Activated T-helper 2 cell treated with anti-CD3 and anti-CD28 coated beads, Interferon-gamma antibody, Interleukin-2, Interleukin-4, amounts not matched to agents 10 μg/mL and 5 μg/mL and 100 μg/mL, durations not matched to agents 14 hours and 24 hours and 36 hours (primary cell): ENCODE measurements at regions of chr7 and their contacts with region 1.

Region 1: DNA sequence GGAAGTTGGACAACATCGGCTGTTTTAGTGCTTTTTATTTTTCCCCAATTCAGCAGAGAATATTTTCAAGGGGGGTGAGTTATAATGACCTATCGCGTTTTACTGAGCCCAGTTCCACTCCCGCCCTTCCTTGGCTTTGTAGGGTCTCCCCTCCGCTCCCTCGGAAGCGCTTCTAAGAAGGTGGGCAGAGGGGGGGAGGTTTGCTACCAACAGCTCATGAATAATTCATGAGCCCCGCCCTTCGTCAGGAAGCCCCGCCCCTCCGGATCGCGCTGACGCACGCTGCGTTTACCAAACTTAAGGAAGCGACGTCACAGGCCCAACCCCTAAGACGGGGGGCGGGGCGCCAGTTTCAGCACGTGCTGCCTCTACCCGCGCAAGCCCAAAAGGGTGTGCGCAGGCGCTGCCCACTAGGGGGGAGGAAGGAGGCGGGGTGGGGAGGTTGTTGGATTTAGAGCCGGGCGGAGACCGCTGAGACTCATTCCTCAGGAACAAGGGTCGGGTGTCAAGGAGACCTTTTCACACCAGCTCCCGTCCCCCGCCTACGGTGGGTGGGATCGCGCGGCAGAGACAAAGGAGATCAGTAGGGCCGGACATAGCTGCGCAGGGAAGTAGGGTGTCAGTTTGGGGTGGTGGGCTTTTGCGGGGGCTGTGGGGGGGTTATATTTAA is 529 bp upstream of the MEPCE start:
- DNase-seq: peak; percentile 100
- H3K4me3 Mint-ChIP-seq: peak overlapping the region; percentile 90
- H3K27ac Mint-ChIP-seq: peak overlapping the region; percentile 96
- H3K4me1 Mint-ChIP-seq: peaks cover 28% of the 10 kb centered on the region
- H3K27me3 Mint-ChIP-seq: peaks cover 2% of the 10 kb centered on the region

Region 2: GRCh38 chr7:100101016-100101862 is 327.9 kb before region 1 on chr7 and contains the starts of genes AP4M1 and MCM7:
- intact Hi-C with region 1: loop called (anchors 2 kb)
- DNase-seq: peak; percentile 98
- H3K4me3 Mint-ChIP-seq: peak within 1 kb of the TSS; percentile 93
- H3K27ac Mint-ChIP-seq: peak within 1 kb of the TSS; percentile 93
- H3K4me1 Mint-ChIP-seq: peaks cover 37% of the 10 kb centered on the region
- H3K27me3 Mint-ChIP-seq: no peaks in the 10 kb centered on the region
- total RNA-seq, gene AP4M1: 12.2 and 16.4 TPM in 2 replicates
- total RNA-seq, gene MCM7: 383 and 389 TPM in 2 replicates

Region 3: DNA sequence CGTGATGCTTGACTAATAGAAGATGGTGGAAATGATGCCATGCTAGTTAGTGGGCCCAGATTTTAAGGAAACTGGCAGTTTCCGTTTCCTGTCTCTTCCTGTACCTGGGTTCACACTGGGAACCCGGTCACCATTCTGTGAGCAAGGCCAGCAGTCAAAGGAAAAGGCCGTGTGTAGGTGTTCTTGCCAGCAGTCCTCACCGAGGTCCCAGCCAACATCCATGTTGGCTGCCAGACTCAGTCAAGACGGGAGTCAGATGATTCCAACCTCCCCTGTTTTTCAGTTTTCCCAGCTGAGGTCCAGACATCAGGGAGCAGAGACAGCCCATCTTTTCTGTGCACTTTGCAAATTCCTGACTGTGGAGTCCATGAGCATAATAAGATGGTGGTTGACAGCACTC is 86.3 kb before region 1 on chr7:
- intact Hi-C with region 1: loop called (anchors 1 kb)
- DNase-seq: no peak
- H3K4me3 Mint-ChIP-seq: no peak overlapping the region
- H3K27ac Mint-ChIP-seq: peak overlapping the region; percentile 46
- H3K4me1 Mint-ChIP-seq: peaks cover 25% of the 10 kb centered on the region
- H3K27me3 Mint-ChIP-seq: no peaks in the 10 kb centered on the region

Region 4: DNA sequence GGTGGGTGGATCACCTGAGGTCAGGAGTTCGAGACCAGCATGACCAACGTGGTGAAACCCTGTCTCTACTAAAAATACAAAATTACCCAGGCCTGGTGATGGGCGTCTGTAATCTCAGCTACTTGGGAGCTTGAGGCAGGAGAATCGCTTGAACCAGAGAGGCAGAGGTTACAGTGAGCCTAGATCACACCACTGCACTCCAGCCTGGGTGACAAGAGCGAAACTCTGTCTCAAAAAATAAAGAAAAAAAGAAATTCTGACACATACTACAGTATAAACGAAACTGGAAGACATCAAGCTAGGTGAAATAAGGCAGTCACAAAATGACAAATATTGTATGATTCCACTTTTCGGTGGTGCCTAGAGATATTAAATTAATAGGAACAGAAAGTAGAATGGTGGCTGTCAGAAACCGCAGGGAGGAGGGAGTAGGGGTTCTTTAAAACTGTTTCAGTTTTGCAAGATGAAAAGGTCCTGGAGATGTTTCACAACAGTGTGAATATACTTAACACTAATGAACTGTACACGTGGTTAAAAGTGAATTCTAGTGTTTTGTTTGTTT is 32.6 kb before region 1 on chr7:
- intact Hi-C with region 1: loop called (anchors 2 kb)
- DNase-seq: peak; percentile 58
- H3K4me3 Mint-ChIP-seq: no peak overlapping the region
- H3K27ac Mint-ChIP-seq: peak overlapping the region; percentile 23
- H3K4me1 Mint-ChIP-seq: peaks cover 25% of the 10 kb centered on the region
- H3K27me3 Mint-ChIP-seq: peaks cover 35% of the 10 kb centered on the region

Region 5: GRCh38 chr7:100478966-100479665 is 50.0 kb after region 1 on chr7 and contains the start of gene TSC22D4:
- intact Hi-C with region 1: loop called (anchors 1 kb)
- DNase-seq: peak; percentile 86
- H3K4me3 Mint-ChIP-seq: peak within 1 kb of the TSS; percentile 99
- H3K27ac Mint-ChIP-seq: peak within 1 kb of the TSS; percentile 88
- H3K4me1 Mint-ChIP-seq: peaks cover 26% of the 10 kb centered on the region
- H3K27me3 Mint-ChIP-seq: no peaks in the 10 kb centered on the region
- total RNA-seq, gene TSC22D4: 103 and 106 TPM in 2 replicates

Region 6: DNA sequence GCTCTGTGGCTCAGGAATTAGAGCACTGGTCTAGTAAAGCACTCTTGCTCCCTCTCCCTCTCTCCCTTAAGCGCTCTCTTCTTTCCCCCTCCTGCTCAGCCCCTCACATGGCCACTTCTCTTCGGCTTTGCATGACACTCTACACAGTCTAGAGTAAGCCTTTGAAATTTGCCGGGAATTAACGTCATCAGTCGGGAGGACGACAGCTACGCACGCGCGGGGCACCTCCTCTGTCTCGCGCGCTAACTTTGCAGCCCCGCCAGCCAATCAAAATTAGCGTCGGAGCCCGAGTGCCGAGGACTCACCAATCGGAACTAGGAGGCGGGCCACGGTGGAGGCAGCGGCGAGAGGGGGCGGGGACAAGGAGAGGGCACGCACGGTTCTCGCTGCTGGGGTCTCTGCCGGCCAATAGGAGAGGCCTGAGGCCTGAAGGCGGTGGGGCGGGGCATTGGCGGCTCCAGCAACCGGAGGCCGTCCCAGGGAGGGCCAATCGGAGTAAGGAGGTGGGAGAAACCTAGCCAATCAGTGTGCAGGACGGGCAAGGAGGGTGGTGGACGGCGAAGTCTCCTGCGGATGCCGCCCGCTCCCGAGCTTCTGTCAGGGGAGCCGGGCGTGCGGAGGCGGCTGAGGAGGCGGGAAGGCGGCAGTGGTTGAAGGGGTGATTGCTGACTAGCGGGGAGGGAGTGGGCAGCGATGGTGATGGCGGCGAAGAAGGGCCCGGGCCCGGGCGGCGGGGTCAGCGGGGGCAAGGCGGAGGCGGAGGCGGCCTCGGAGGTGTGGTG is 109.7 kb after region 1 on chr7 and contains the start of gene AGFG2:
- intact Hi-C with region 1: loop called (anchors 1 kb)
- DNase-seq: peak; percentile 100
- H3K4me3 Mint-ChIP-seq: peak within 1 kb of the TSS; percentile 99
- H3K27ac Mint-ChIP-seq: peak within 1 kb of the TSS; percentile 93
- H3K4me1 Mint-ChIP-seq: peaks cover 36% of the 10 kb centered on the region
- H3K27me3 Mint-ChIP-seq: no peaks in the 10 kb centered on the region
- total RNA-seq, gene AGFG2: 75.5 and 75.7 TPM in 2 replicates

Region 7: GRCh38 chr7:100611974-100612729 is 183.1 kb after region 1 on chr7 and contains the start of gene MOSPD3:
- intact Hi-C with region 1: loop called (anchors 1 kb)
- DNase-seq: peak; percentile 98
- H3K4me3 Mint-ChIP-seq: peak within 1 kb of the TSS; percentile 97
- H3K27ac Mint-ChIP-seq: peak within 1 kb of the TSS; percentile 99
- H3K4me1 Mint-ChIP-seq: peaks cover 10% of the 10 kb centered on the region
- H3K27me3 Mint-ChIP-seq: no peaks in the 10 kb centered on the region
- total RNA-seq, gene MOSPD3: 14.1 TPM in 2 replicates

Region 8: DNA sequence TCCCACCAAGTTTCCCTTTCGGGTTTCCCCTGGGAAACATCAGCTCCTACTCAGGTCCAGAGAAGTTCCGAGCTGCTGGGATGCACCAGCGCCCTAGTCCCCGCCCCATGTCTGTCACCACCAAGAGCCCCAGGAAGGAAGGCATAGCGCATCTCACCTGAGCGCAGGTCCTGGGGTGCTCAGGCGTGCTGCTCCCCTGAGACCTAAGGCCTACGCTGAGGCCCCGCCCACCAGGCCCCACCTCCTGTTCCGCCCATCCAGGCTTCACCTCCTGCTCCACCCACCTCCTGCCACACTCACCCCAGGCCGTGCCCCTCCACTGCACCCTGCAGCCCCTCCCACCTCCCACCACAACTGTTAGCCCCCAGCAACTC is 213.4 kb after region 1 on chr7:
- intact Hi-C with region 1: no loop called
- DNase-seq: no peak
- H3K4me3 Mint-ChIP-seq: no peak overlapping the region
- H3K27ac Mint-ChIP-seq: no peak overlapping the region
- H3K4me1 Mint-ChIP-seq: peaks cover 1% of the 10 kb centered on the region
- H3K27me3 Mint-ChIP-seq: peaks cover 3% of the 10 kb centered on the region